CD8-positive, alpha-beta T cell (primary cell): ENCODE measurements at regions of chr6 and their contacts with region 1.

Region 1: DNA sequence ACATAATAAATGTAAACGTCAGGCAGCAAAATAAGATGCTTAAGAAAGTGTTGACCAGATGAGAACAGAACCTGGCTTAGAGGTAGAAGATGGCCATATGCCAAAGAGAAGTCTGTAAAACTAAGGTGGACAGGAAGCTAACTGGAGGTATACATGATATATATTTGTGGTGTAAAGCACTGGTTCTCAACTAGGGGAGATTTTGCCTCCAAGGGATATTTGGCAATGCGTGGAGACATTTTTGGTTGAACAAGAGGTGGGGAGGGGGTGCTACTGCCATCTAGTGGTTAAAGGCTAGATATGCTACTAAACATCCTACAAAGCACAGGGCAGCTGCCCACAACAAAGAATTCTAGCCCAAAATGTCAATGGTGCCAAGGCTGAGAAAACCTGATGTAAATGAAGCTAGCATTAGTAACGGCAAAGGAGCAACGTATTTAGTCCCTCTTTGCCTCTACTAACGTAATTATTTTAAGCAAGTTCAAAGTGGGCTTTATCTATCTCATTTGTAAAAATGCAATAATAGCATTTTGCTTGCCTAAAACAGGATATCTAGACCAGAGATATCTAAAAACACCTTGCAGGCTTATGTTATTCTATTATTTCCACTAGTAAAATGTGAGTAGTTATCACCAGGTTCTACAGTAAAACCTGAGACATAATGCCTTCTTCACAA is 182.6 kb downstream of the RNGTT start:
- DNase-seq: peak; percentile 9 to 77 (median 45)
- ATAC-seq: peak; percentile 75
- H3K4me3 ChIP-seq: no peak overlapping the region
- H3K4me3 Mint-ChIP-seq: no peak overlapping the region
- H3K27ac ChIP-seq: no peak overlapping the region
- H3K27ac Mint-ChIP-seq: no peak overlapping the region
- H3K4me1 ChIP-seq: no peaks in the 10 kb centered on the region
- H3K4me1 Mint-ChIP-seq: peaks cover 4% of the 10 kb centered on the region
- H3K27me3 ChIP-seq: no peaks in the 10 kb centered on the region
- H3K27me3 Mint-ChIP-seq: no peaks in the 10 kb centered on the region
- CTCF ChIP-seq: peak; percentile 87

Region 2: DNA sequence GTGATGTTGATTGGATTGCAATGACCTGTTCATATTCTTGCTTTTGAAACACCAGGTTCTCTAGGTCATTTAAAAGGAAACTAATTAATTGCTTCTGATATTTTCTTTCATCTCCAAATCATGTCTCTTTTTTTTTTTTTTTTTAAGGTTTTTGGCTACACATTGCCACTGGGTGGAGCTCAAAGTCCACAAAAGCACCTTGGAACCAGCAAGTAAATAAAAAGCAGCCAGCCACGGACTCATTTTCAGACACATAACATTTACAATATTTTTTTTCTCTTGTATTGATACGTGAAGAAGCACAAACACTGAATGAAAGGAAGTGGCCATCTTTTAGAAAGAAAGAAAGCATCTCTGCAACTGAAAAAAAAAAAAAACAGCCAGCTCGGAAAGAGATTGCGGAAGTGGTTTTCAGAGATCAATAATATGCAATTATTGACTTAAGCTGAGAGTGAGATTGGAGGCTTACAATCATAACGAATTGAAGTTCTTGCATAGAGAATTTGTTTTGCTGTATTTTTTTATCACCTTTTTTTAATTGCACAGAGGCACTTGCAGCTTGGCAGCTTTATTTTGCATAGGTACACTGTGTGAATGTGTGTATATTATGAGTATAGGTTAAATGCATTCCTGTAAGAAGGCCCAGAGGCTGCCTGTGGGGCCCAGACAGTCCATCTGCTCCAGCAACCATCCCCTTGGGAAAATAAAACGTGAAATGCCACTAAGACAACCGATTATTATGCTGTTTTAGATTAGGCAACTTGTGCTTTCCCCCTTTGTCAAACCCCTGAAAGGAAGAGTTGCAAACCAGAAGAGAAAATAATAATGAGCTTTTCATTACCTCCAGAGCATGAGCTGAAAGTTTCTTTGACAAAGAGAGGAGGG is 1714.2 kb before region 1 on chr6:
- CTCF ChIA-PET with region 1: no interaction called
- POLR2A ChIA-PET with region 1: no interaction called
- intact Hi-C with region 1: loop called (anchors 2 to 10 kb)
- DNase-seq: peak in 3 of 9 experiments; percentile 20 to 62 (median 54)
- ATAC-seq: no peak
- H3K4me3 ChIP-seq: no peak overlapping the region
- H3K4me3 Mint-ChIP-seq: no peak overlapping the region
- H3K27ac ChIP-seq: no peak overlapping the region
- H3K27ac Mint-ChIP-seq: no peak overlapping the region
- H3K4me1 ChIP-seq: no peaks in the 10 kb centered on the region
- H3K4me1 Mint-ChIP-seq: no peaks in the 10 kb centered on the region
- H3K27me3 ChIP-seq: no peaks in the 10 kb centered on the region
- H3K27me3 Mint-ChIP-seq: peaks cover 5% of the 10 kb centered on the region
- CTCF ChIP-seq: peak; percentile 46

Region 3: GRCh38 chr6:87393022-87393622 is 1387.7 kb before region 1 on chr6:
- CTCF ChIA-PET with region 1: interaction called, 9 read pairs
- POLR2A ChIA-PET with region 1: no interaction called
- intact Hi-C with region 1: loop called (anchors 1 to 5 kb)
- DNase-seq: peak in 7 of 9 experiments; percentile 8 to 79 (median 29)
- ATAC-seq: peak; percentile 99
- H3K4me3 ChIP-seq: no peak overlapping the region
- H3K4me3 Mint-ChIP-seq: no peak overlapping the region
- H3K27ac ChIP-seq: no peak overlapping the region
- H3K27ac Mint-ChIP-seq: no peak overlapping the region
- H3K4me1 ChIP-seq: no peaks in the 10 kb centered on the region
- H3K4me1 Mint-ChIP-seq: peaks cover 3% of the 10 kb centered on the region
- H3K27me3 ChIP-seq: no peaks in the 10 kb centered on the region
- H3K27me3 Mint-ChIP-seq: no peaks in the 10 kb centered on the region
- CTCF ChIP-seq: peak; percentile 72

Region 4: DNA sequence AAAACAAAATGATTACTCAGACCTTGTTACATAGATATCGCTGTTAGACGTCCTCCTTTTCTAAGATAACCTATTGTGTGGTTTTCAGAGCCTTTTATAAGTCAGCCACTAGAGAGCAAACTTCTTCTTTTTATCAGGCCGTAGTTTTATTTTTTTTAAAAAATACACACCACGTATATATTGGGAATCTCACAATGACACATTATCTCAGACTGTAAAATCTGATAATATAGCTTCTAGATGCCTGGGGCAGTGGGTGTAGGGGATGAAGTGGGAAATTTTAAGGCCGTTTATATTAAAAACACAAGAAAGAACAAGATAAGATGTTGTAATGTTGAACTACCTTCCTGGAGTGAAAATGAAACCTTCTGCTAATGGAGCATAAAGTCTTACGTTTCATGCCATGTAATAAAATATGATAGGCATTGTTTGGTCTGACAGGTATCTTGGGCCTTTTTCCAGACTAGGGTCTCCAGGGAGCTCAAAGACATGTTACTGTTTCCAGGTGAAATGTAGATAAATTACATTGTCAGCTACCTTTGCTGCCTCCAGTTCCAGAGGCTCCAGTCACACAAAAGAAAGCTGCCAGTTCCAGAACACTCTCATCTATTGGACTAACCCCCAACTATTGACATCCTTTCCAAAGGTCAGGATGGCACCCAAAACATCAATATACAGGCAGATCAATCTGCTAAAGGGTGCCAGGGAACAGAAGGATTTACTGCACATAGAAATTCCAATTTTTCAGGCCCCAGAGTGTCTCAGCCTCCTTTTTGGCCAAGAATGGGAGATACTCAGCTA is 948.6 kb before region 1 on chr6:
- CTCF ChIA-PET with region 1: no interaction called
- POLR2A ChIA-PET with region 1: no interaction called
- intact Hi-C with region 1: loop called (anchors 2 kb)
- DNase-seq: peak in 2 of 9 experiments; percentile 30 to 53
- ATAC-seq: peak; percentile 55
- H3K4me3 ChIP-seq: peak overlapping the region; percentile 34 to 52
- H3K4me3 Mint-ChIP-seq: peak overlapping the region; percentile 91
- H3K27ac ChIP-seq: peak overlapping the region; percentile 31 to 53
- H3K27ac Mint-ChIP-seq: peak overlapping the region; percentile 88
- H3K4me1 ChIP-seq: peaks cover 4% of the 10 kb centered on the region
- H3K4me1 Mint-ChIP-seq: peaks cover 8% of the 10 kb centered on the region
- H3K27me3 ChIP-seq: no peaks in the 10 kb centered on the region
- H3K27me3 Mint-ChIP-seq: peaks cover 2% of the 10 kb centered on the region
- CTCF ChIP-seq: no peak

Region 5: GRCh38 chr6:87929843-87930288 is 851.0 kb before region 1 on chr6:
- CTCF ChIA-PET with region 1: interaction called, 6 read pairs
- POLR2A ChIA-PET with region 1: no interaction called
- intact Hi-C with region 1: loop called (anchors 1 to 2 kb)
- DNase-seq: peak; percentile 13 to 66 (median 44)
- ATAC-seq: peak; percentile 66
- H3K4me3 ChIP-seq: no peak overlapping the region
- H3K4me3 Mint-ChIP-seq: no peak overlapping the region
- H3K27ac ChIP-seq: no peak overlapping the region
- H3K27ac Mint-ChIP-seq: no peak overlapping the region
- H3K4me1 ChIP-seq: no peaks in the 10 kb centered on the region
- H3K4me1 Mint-ChIP-seq: peaks cover 6% of the 10 kb centered on the region
- H3K27me3 ChIP-seq: no peaks in the 10 kb centered on the region
- H3K27me3 Mint-ChIP-seq: no peaks in the 10 kb centered on the region
- CTCF ChIP-seq: peak; percentile 52

Region 6: GRCh38 chr6:88796980-88797379 is 16.1 kb after region 1 on chr6:
- CTCF ChIA-PET with region 1: interaction called, 10 read pairs
- POLR2A ChIA-PET with region 1: interaction called, 3 read pairs
- intact Hi-C with region 1: no loop called
- DNase-seq: no peak
- ATAC-seq: no peak
- H3K4me3 ChIP-seq: no peak overlapping the region
- H3K4me3 Mint-ChIP-seq: no peak overlapping the region
- H3K27ac ChIP-seq: no peak overlapping the region
- H3K27ac Mint-ChIP-seq: no peak overlapping the region
- H3K4me1 ChIP-seq: no peaks in the 10 kb centered on the region
- H3K4me1 Mint-ChIP-seq: no peaks in the 10 kb centered on the region
- H3K27me3 ChIP-seq: no peaks in the 10 kb centered on the region
- H3K27me3 Mint-ChIP-seq: no peaks in the 10 kb centered on the region
- CTCF ChIP-seq: no peak

Region 7: DNA sequence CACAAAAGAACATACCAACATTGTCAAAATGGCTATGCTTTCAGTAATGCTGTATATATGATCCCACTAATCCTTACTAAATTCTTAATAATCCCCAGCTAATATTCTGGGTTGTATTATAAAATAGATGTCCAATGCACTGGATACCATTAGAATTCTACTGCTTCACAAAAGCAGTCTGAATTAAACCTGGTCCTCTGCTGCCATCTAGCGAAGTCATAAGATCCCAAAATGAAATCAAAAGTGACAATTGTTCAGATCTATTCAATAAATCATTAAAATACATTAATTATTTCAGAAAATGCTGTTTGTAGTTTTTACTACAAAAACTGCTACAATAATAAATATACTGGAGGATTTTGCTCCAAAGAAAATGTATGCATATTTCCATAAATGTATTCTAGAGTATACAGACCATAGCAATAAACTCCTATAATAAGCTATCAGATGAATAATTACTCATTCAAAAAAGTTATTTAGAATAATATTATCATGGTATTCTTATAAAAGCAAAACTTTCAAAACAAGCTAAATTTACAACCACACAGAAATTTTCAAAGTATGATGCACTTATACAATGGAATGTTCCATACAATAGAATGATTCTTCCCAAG is 90.0 kb after region 1 on chr6:
- CTCF ChIA-PET with region 1: interaction called, 7 read pairs
- POLR2A ChIA-PET with region 1: no interaction called
- intact Hi-C with region 1: loop called in 1 of 2 experiments (anchors 5 kb)
- DNase-seq: peak in 8 of 9 experiments; percentile 7 to 72 (median 38)
- ATAC-seq: no peak
- H3K4me3 ChIP-seq: no peak overlapping the region
- H3K4me3 Mint-ChIP-seq: no peak overlapping the region
- H3K27ac ChIP-seq: no peak overlapping the region
- H3K27ac Mint-ChIP-seq: no peak overlapping the region
- H3K4me1 ChIP-seq: peaks cover 5% of the 10 kb centered on the region
- H3K4me1 Mint-ChIP-seq: peaks cover 9% of the 10 kb centered on the region
- H3K27me3 ChIP-seq: no peaks in the 10 kb centered on the region
- H3K27me3 Mint-ChIP-seq: no peaks in the 10 kb centered on the region
- CTCF ChIP-seq: peak; percentile 86

Region 8: DNA sequence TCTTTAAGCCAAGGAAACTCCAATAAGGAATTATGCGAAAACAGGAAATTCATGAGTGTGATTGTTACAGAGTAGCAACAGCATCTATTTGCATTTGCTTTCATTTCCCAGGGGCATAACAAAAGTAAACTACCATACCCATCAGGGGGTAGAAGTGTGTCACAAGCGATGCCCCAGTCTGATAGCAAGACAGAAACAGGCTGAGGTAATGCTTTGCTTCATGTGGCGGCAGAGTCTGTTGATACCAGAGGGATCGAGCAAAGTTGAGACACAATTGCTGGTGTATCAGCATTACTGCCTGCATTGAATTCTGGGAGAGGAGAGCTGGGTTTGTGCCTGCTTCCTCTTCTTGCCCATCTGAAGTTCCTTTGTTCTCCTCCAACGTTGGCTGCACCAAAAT is 908.9 kb after region 1 on chr6:
- CTCF ChIA-PET with region 1: no interaction called
- POLR2A ChIA-PET with region 1: no interaction called
- intact Hi-C with region 1: no loop called
- DNase-seq: no peak
- ATAC-seq: no peak
- H3K4me3 ChIP-seq: no peak overlapping the region
- H3K4me3 Mint-ChIP-seq: no peak overlapping the region
- H3K27ac ChIP-seq: no peak overlapping the region
- H3K27ac Mint-ChIP-seq: no peak overlapping the region
- H3K4me1 ChIP-seq: no peaks in the 10 kb centered on the region
- H3K4me1 Mint-ChIP-seq: peaks cover 8% of the 10 kb centered on the region
- H3K27me3 ChIP-seq: no peaks in the 10 kb centered on the region
- H3K27me3 Mint-ChIP-seq: no peaks in the 10 kb centered on the region
- CTCF ChIP-seq: no peak